ENCODE measurements at regions of chr14 and their contacts with region 1.

Region 1: GRCh38 chr14:94110552-94111181 is at the start of gene IFI27:
- DNase-seq: peak; percentile 62
- H3K4me3 ChIP-seq: peak within 1 kb of the TSS; percentile 20 to 76 (median 33)
- H3K27ac ChIP-seq: peak within 1 kb of the TSS; percentile 67
- H3K4me1 ChIP-seq: peaks cover 19% of the 10 kb centered on the region
- H3K27me3 ChIP-seq: no peaks in the 10 kb centered on the region
- CTCF ChIP-seq: no peak
- POLR2A ChIP-seq: peak; percentile 85
- total RNA-seq, gene IFI27: 72.0 and 126 TPM in 2 replicates

Region 2: GRCh38 chr14:93059917-93060545 is 1050.6 kb before region 1 on chr14:
- CTCF ChIA-PET with region 1: no interaction called
- POLR2A ChIA-PET with region 1: no interaction called
- dilution Hi-C with region 1: no loop called
- intact Hi-C with region 1: loop called (anchors 10 kb)
- DNase-seq: no peak
- H3K4me3 ChIP-seq: no peak overlapping the region
- H3K27ac ChIP-seq: no peak overlapping the region
- H3K4me1 ChIP-seq: no peaks in the 10 kb centered on the region
- H3K27me3 ChIP-seq: no peaks in the 10 kb centered on the region
- CTCF ChIP-seq: no peak
- POLR2A ChIP-seq: no peak

Region 3: DNA sequence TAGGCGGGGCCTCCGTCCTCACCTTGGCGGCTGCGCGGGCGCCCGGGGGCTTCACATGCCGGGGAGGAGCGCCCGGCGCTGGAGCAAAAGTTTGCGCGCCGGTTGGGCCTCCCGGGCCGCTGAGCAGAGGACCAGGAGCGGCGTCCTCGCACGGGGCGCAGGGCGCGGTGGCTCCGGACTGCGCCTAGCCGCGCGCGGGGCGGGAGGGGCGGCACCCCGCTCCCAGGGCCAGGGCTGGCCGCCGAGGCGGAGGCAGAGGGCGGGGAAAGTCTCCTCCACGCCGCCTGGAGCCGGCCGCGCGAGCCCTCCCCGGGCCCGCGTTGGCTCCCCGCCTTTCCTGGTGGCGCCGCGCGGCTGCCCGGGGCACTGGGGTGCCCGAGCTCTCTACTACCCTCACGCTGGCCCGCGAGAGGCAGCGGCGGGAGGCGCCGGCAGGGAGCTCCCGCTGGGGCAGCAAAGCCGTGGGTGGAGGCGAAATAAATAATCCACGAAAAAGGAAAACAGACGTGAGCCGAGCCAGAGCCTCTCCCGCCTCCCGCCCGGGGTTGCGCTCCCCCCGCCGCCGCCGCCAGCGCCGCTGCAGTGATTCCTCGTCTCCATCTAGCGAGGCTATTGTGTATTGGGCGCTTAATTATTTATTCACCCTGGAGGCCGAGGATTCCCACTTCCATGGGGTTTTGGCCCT is 322.0 kb before region 1 on chr14:
- CTCF ChIA-PET with region 1: no interaction called
- POLR2A ChIA-PET with region 1: no interaction called
- dilution Hi-C with region 1: no loop called
- intact Hi-C with region 1: no loop called
- DNase-seq: no peak
- H3K4me3 ChIP-seq: no peak overlapping the region
- H3K27ac ChIP-seq: no peak overlapping the region
- H3K4me1 ChIP-seq: no peaks in the 10 kb centered on the region
- H3K27me3 ChIP-seq: peaks cover 5 to 6% of the 10 kb centered on the region in 2 experiments
- CTCF ChIP-seq: no peak
- POLR2A ChIP-seq: no peak